ENCODE measurements at regions of chr14 and their contacts with region 1.

Region 1: DNA sequence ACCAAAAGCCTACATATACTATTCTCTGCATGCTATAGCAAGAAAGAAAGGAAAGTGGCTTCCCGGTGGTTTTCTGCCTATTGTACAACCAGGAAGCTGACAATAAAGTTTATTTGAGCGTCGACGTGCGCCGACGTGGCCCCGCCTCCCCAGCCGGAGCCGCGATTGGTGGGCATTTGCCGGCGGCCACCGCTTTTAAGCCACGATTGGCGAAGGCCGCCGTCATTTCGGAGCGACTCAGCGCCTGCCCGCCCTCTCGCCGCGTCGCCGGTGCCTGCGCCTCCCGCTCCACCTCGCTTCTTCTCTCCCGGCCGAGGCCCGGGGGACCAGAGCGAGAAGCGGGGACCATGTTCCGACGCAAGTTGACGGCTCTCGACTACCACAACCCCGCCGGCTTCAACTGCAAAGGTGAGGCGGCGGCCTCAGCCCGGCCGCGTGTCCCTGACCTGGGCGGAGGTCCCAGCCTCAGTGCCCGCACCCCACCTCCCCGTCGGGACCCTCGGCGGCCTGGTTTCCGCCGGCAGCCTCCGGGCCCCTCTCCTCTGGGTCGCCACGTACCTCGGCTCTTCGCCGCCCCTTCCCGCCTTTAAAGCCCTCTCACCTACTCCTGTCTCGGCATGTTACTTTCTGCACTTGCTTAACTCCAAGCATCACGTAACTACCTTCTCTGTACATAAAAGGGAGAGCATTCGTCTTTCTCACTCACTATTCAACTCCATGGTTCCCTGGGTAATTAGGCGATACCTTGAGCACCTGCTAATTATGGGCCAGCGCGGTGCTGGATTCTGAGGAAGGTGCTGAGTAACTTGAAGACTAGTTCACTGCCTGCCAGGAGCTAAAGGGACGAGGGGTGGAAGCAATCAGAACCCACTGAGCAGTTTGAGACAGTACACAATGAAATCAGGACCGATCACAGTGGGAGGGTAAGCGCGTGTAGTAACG is at the start of gene RTRAF:
- DNase-seq: peak; percentile 95
- H3K4me3 ChIP-seq: peak within 1 kb of the TSS; percentile 81
- H3K27ac ChIP-seq: peak within 1 kb of the TSS; percentile 81
- H3K4me1 ChIP-seq: peaks cover 3% of the 10 kb centered on the region
- H3K27me3 ChIP-seq: no peaks in the 10 kb centered on the region
- CTCF ChIP-seq: no peak
- total RNA-seq, gene RTRAF: 258 and 267 TPM in 2 replicates

Region 2: GRCh38 chr14:51357250-51357649 is 632.3 kb before region 1 on chr14:
- CTCF ChIA-PET with region 1: no interaction called
- POLR2A ChIA-PET with region 1: no interaction called
- intact Hi-C with region 1: no loop called
- DNase-seq: peak; percentile 49
- H3K4me3 ChIP-seq: no peak overlapping the region
- H3K27ac ChIP-seq: peak overlapping the region; percentile 63
- H3K4me1 ChIP-seq: peaks cover 34% of the 10 kb centered on the region
- H3K27me3 ChIP-seq: no peaks in the 10 kb centered on the region
- CTCF ChIP-seq: no peak

Region 3: GRCh38 chr14:52012635-52013034 is 23.1 kb after region 1 on chr14:
- CTCF ChIA-PET with region 1: no interaction called
- POLR2A ChIA-PET with region 1: no interaction called
- intact Hi-C with region 1: no loop called
- DNase-seq: no peak
- H3K4me3 ChIP-seq: no peak overlapping the region
- H3K27ac ChIP-seq: peak overlapping the region; percentile 35
- H3K4me1 ChIP-seq: peaks cover 27% of the 10 kb centered on the region
- H3K27me3 ChIP-seq: no peaks in the 10 kb centered on the region
- CTCF ChIP-seq: no peak

Region 4: GRCh38 chr14:52272375-52272774 is 282.8 kb after region 1 on chr14:
- CTCF ChIA-PET with region 1: no interaction called
- POLR2A ChIA-PET with region 1: no interaction called
- intact Hi-C with region 1: loop called (anchors 10 kb)
- DNase-seq: peak; percentile 50
- H3K4me3 ChIP-seq: no peak overlapping the region
- H3K27ac ChIP-seq: no peak overlapping the region
- H3K4me1 ChIP-seq: no peaks in the 10 kb centered on the region
- H3K27me3 ChIP-seq: peaks cover 76% of the 10 kb centered on the region
- CTCF ChIP-seq: peak; percentile 46; the same call in 1 of the 2 replicates